Dendritic cell treated with granulocyte-macrophage colony-stimulating factor and Interleukin-4, amounts not matched to agents 40 ng/mL and 50 ng/mL, for 4 days (primary cell): ENCODE measurements at regions of chr9 and their contacts with region 1.

Region 1: DNA sequence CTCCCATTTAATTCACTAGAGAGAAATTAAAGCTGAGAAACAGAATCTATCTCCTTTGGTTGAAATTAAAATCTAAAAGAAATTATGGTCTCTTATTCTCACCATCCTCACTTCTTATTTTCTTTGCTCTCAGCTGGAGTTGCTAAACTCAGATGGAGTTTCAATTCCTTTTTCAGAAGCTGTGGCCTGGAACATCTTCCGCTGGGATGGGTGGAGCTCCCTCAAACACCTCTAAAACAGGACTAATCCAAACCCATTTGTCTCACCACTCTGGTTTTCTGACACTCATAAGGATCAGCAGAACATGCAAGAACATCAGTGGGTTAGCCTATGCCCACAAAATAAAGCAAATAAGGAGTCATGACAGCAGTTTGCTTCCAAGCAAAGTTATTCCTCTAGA is 39.6 kb upstream of the CEP78 start:
- H3K4me3 Mint-ChIP-seq: peak overlapping the region; percentile 20
- H3K27ac Mint-ChIP-seq: peak overlapping the region; percentile 80
- H3K4me1 Mint-ChIP-seq: peaks cover 65% of the 10 kb centered on the region
- H3K27me3 Mint-ChIP-seq: no peaks in the 10 kb centered on the region

Region 2: GRCh38 chr9:78144663-78145377 is 51.4 kb before region 1 on chr9:
- intact Hi-C with region 1: loop called (anchors 10 kb)
- H3K4me3 Mint-ChIP-seq: no peak overlapping the region
- H3K27ac Mint-ChIP-seq: peak overlapping the region; percentile 75
- H3K4me1 Mint-ChIP-seq: peaks cover 42% of the 10 kb centered on the region
- H3K27me3 Mint-ChIP-seq: no peaks in the 10 kb centered on the region

Region 3: GRCh38 chr9:78213712-78214111 is 17.5 kb after region 1 on chr9:
- intact Hi-C with region 1: no loop called
- H3K4me3 Mint-ChIP-seq: no peak overlapping the region
- H3K27ac Mint-ChIP-seq: no peak overlapping the region
- H3K4me1 Mint-ChIP-seq: peaks cover 6% of the 10 kb centered on the region
- H3K27me3 Mint-ChIP-seq: no peaks in the 10 kb centered on the region